ENCODE measurements at regions of chr12 and their contacts with region 1.

Region 1: DNA sequence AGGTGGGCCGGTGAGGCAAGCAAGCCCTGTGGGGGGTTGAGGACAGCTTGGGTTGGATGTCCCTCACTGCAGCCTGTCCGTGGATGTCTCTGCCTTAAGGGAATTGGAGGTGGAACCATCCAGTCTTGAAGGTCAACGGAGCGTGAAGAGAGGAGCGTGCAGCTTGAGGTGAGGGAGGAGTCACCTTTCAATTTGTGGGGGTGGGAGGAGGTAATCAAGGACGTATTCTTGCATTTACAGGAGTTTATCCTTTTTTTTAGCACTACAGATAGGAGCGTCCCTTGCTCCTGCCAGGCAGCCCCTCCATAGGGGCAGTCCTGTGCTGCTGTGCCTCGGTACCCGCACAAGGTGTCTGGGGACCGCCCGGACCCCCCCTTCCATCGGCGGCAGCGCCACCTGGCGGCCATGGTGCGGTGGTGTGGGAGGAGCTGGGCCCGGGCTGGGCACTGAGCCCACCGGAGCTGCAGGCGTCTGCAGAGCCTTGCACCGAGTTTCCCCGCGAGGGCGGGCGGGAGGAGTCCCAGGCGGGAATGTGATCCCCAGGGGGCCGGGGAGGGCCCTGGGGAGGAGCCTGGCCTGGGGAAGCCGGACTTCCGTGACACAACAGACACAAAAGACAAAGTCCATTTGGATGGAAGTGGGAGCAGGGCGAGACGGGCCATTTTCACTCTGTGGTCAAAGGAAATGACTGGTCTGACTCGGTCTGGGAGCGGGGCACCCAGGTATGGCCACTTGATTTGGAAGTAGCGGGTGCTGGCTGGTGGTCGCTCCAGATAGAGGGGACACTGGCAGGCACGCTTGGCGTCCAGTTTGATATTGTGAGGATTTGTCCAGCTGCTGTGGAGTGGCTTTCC is 923 bp downstream of the DNAJC22 start:
- DNase-seq: peak; percentile 70 to 81 (median 75)
- H3K4me3 ChIP-seq: peak overlapping the region; percentile 38 to 57
- H3K4me3 Mint-ChIP-seq: peak overlapping the region; percentile 81 to 92 (median 87)
- H3K27ac ChIP-seq: no peak overlapping the region
- H3K27ac Mint-ChIP-seq: peak overlapping the region in 2 of 7 donors; percentile 65 to 78
- H3K4me1 ChIP-seq: peaks cover 44% of the 10 kb centered on the region
- H3K4me1 Mint-ChIP-seq: peaks cover 15 to 44% (median 31%) of the 10 kb centered on the region in 4 donors
- H3K27me3 ChIP-seq: peaks cover 56% of the 10 kb centered on the region
- H3K27me3 Mint-ChIP-seq: peaks cover 25 to 46% of the 10 kb centered on the region in 2 donors

Region 2: DNA sequence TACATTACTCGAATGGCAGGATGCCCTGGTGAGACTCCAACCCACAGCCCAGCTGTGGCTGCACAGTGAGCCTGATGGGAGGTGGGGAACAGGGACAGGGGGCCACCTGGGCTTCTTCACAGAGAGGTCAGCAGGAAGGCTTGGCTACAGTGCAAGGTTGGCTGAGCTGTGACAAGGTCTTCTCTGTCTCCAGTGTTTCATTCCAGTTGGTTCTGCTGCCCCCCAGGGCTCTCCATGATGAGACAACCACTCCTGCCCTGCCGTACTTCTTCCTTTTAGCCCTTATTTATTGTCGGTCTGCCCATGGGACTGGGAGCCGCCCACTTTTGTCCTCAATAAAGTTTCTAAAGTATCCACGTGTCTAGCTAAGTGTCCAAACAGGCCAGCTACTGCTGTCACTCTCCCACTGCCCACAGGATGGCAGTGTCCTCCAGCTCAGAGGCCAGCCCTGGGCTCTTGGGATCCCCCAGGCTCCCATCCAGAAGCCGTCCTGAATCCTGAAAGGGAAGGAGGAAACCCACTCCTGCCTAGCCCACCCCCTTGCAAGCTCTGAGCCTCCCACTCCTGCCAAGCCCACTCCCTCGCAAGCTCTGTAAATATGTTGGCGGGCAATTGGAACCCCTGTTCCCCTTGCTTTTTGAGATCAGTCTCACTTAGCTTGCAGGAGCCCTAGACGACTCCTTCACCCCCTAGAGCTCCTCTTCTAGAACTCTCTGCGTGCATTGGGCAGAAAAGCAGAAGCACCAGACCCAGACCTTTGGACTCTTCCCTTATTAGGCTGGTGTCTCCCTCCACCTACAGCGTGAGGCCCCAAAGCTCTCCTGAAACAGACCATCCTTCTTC is 16.0 kb before region 1 on chr12:
- CTCF ChIA-PET with region 1: interaction called, 48 read pairs
- POLR2A ChIA-PET with region 1: interaction called, 3 read pairs
- intact Hi-C with region 1: no loop called
- DNase-seq: no peak
- H3K4me3 ChIP-seq: no peak overlapping the region
- H3K4me3 Mint-ChIP-seq: no peak overlapping the region
- H3K27ac ChIP-seq: no peak overlapping the region
- H3K27ac Mint-ChIP-seq: no peak overlapping the region
- H3K4me1 ChIP-seq: peaks cover 6% of the 10 kb centered on the region
- H3K4me1 Mint-ChIP-seq: peaks cover 9 to 12% (median 10%) of the 10 kb centered on the region in 4 donors
- H3K27me3 ChIP-seq: peaks cover 20% of the 10 kb centered on the region
- H3K27me3 Mint-ChIP-seq: peaks cover 28 to 35% of the 10 kb centered on the region in 2 donors

Region 3: GRCh38 chr12:49336645-49337584 is 10.7 kb before region 1 on chr12 and contains the start of gene C1QL4:
- CTCF ChIA-PET with region 1: interaction called, 48 read pairs
- POLR2A ChIA-PET with region 1: interaction called, 3 read pairs
- intact Hi-C with region 1: no loop called
- DNase-seq: peak; percentile 81 to 87 (median 81)
- H3K4me3 ChIP-seq: peak within 1 kb of the TSS in 1 of 2 donors; percentile 43
- H3K4me3 Mint-ChIP-seq: peak within 1 kb of the TSS; percentile 13 to 86 (median 70)
- H3K27ac ChIP-seq: no peak within 1 kb of the TSS
- H3K27ac Mint-ChIP-seq: peak within 1 kb of the TSS in 2 of 7 donors; percentile 24 to 52
- H3K4me1 ChIP-seq: peaks cover 22% of the 10 kb centered on the region
- H3K4me1 Mint-ChIP-seq: peaks cover 16 to 41% (median 23%) of the 10 kb centered on the region in 4 donors
- H3K27me3 ChIP-seq: peaks cover 37% of the 10 kb centered on the region
- H3K27me3 Mint-ChIP-seq: peaks cover 41 to 63% of the 10 kb centered on the region in 2 donors
- total RNA-seq, gene C1QL4: not detected

Region 4: DNA sequence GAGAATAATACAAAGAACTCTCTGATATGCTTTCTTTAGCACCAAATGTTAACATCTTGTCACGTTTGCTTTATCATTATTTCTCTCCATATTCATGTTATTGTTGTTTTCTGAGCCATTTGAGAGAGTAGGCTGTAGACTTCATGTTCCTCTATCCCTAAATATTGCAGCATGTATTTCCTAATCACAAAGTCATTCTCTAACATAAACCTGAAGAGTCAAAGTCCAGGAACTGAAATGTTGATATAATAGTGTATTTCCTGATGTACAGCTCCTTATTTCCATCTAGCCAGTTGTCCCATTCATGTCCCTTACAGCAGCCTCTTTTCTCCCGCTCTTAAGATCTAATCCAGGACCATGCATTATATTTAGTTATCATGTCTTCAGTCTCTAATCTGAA is 92.4 kb after region 1 on chr12:
- CTCF ChIA-PET with region 1: no interaction called
- POLR2A ChIA-PET with region 1: no interaction called
- intact Hi-C with region 1: no loop called
- DNase-seq: no peak
- H3K4me3 ChIP-seq: no peak overlapping the region
- H3K4me3 Mint-ChIP-seq: no peak overlapping the region
- H3K27ac ChIP-seq: no peak overlapping the region
- H3K27ac Mint-ChIP-seq: no peak overlapping the region
- H3K4me1 ChIP-seq: no peaks in the 10 kb centered on the region
- H3K4me1 Mint-ChIP-seq: peaks cover 0 to 3% (median 1%) of the 10 kb centered on the region in 4 donors
- H3K27me3 ChIP-seq: no peaks in the 10 kb centered on the region
- H3K27me3 Mint-ChIP-seq: no peaks in the 10 kb centered on the region

Region 5: GRCh38 chr12:49503674-49504180 is 156.1 kb after region 1 on chr12:
- CTCF ChIA-PET with region 1: interaction called, 538 read pairs
- POLR2A ChIA-PET with region 1: no interaction called
- intact Hi-C with region 1: no loop called
- DNase-seq: no peak
- H3K4me3 ChIP-seq: no peak overlapping the region
- H3K4me3 Mint-ChIP-seq: no peak overlapping the region
- H3K27ac ChIP-seq: no peak overlapping the region
- H3K27ac Mint-ChIP-seq: no peak overlapping the region
- H3K4me1 ChIP-seq: no peaks in the 10 kb centered on the region
- H3K4me1 Mint-ChIP-seq: no peaks in the 10 kb centered on the region
- H3K27me3 ChIP-seq: no peaks in the 10 kb centered on the region
- H3K27me3 Mint-ChIP-seq: no peaks in the 10 kb centered on the region

Region 6: GRCh38 chr12:49567611-49568441 is 220.2 kb after region 1 on chr12 and contains the start of gene MCRS1:
- CTCF ChIA-PET with region 1: no interaction called
- POLR2A ChIA-PET with region 1: no interaction called
- intact Hi-C with region 1: no loop called
- DNase-seq: peak; percentile 92 to 94 (median 93)
- H3K4me3 ChIP-seq: peak within 1 kb of the TSS; percentile 88 to 100
- H3K4me3 Mint-ChIP-seq: peak within 1 kb of the TSS; percentile 92 to 100 (median 99)
- H3K27ac ChIP-seq: peak within 1 kb of the TSS; percentile 89
- H3K27ac Mint-ChIP-seq: peak within 1 kb of the TSS; percentile 93 to 100 (median 99)
- H3K4me1 ChIP-seq: peaks cover 49% of the 10 kb centered on the region
- H3K4me1 Mint-ChIP-seq: peaks cover 32 to 71% (median 54%) of the 10 kb centered on the region in 4 donors
- H3K27me3 ChIP-seq: no peaks in the 10 kb centered on the region
- H3K27me3 Mint-ChIP-seq: no peaks in the 10 kb centered on the region
- total RNA-seq, gene MCRS1: 77.0 to 78.4 TPM

Region 7: GRCh38 chr12:50088583-50089335 is 741.1 kb after region 1 on chr12:
- CTCF ChIA-PET with region 1: no interaction called
- POLR2A ChIA-PET with region 1: no interaction called
- intact Hi-C with region 1: no loop called
- DNase-seq: peak; percentile 45 to 70 (median 54)
- H3K4me3 ChIP-seq: no peak overlapping the region
- H3K4me3 Mint-ChIP-seq: peak overlapping the region in 3 of 8 donors; percentile 15 to 35 (median 25)
- H3K27ac ChIP-seq: no peak overlapping the region
- H3K27ac Mint-ChIP-seq: peak overlapping the region; percentile 4 to 75 (median 44)
- H3K4me1 ChIP-seq: peaks cover 24% of the 10 kb centered on the region
- H3K4me1 Mint-ChIP-seq: peaks cover 11 to 28% (median 23%) of the 10 kb centered on the region in 4 donors
- H3K27me3 ChIP-seq: no peaks in the 10 kb centered on the region
- H3K27me3 Mint-ChIP-seq: no peaks in the 10 kb centered on the region